CD8-positive, alpha-beta T cell (primary cell): ENCODE measurements at regions of chr10 and their contacts with region 1.

Region 1: DNA sequence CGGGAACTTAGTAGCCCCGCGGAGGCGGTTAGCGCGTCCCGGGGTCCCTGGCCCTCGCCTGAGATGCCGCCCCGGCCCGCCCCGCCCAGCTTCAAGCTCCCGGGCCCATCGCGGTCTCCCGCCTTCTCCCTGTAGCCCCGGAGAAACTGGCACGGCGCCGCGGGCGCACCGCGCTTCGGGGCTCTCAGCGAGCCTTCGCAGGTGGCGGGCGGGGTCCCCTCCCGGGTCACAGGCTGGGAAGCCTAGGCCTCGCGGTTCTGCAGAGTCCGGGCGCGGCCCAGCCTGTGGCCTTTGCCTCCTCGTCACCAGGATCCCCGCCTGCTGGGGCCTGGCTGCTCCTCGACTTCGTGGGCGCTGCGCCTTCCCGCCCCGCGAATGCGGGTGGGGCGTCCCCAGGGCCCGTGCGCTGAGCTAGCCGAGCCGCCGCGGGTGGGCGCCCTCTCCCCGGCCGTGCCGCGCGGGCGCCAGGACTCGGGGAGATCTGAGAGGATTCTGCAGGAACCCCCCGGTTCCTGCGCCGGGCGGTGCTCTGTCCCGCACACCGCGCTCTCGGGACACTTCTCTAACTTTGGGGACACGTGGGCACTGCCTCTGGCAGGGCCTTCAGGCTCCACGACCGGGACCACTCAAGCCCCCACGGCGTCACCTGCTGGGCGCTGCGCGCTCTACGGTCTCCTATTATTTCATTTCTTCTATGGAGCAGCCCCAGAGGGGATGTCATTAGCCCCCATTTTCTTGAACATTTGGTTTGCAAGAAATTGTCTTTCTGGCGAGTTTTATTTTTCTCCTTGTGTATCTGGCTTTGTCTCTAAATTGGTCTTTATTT is 682 bp upstream of the RGS10 start:
- DNase-seq: peak; percentile 34 to 83 (median 68)
- ATAC-seq: peak; percentile 43
- H3K4me3 ChIP-seq: peak overlapping the region; percentile 86 to 90
- H3K4me3 Mint-ChIP-seq: peak overlapping the region; percentile 95
- H3K27ac ChIP-seq: peak overlapping the region in 1 of 2 experiments; percentile 83
- H3K27ac Mint-ChIP-seq: peak overlapping the region; percentile 95
- H3K4me1 ChIP-seq: peaks cover 18% of the 10 kb centered on the region
- H3K4me1 Mint-ChIP-seq: peaks cover 42% of the 10 kb centered on the region
- H3K27me3 ChIP-seq: no peaks in the 10 kb centered on the region
- H3K27me3 Mint-ChIP-seq: no peaks in the 10 kb centered on the region
- CTCF ChIP-seq: peak; percentile 72

Region 2: GRCh38 chr10:118568327-118568848 is 974.8 kb before region 1 on chr10:
- CTCF ChIA-PET with region 1: no interaction called
- POLR2A ChIA-PET with region 1: no interaction called
- intact Hi-C with region 1: no loop called
- DNase-seq: peak; percentile 9 to 82 (median 52)
- ATAC-seq: peak; percentile 80
- H3K4me3 ChIP-seq: no peak overlapping the region
- H3K4me3 Mint-ChIP-seq: no peak overlapping the region
- H3K27ac ChIP-seq: no peak overlapping the region
- H3K27ac Mint-ChIP-seq: no peak overlapping the region
- H3K4me1 ChIP-seq: peaks cover 5% of the 10 kb centered on the region
- H3K4me1 Mint-ChIP-seq: peaks cover 6% of the 10 kb centered on the region
- H3K27me3 ChIP-seq: no peaks in the 10 kb centered on the region
- H3K27me3 Mint-ChIP-seq: no peaks in the 10 kb centered on the region
- CTCF ChIP-seq: peak; percentile 72

Region 3: GRCh38 chr10:118698421-118698820 is 844.8 kb before region 1 on chr10:
- CTCF ChIA-PET with region 1: no interaction called
- POLR2A ChIA-PET with region 1: no interaction called
- intact Hi-C with region 1: loop called in 1 of 2 experiments (anchors 5 kb)
- DNase-seq: peak; percentile 59 to 92 (median 82)
- ATAC-seq: peak; percentile 100
- H3K4me3 ChIP-seq: peak overlapping the region; percentile 10 to 11
- H3K4me3 Mint-ChIP-seq: peak overlapping the region; percentile 75
- H3K27ac ChIP-seq: peak overlapping the region; percentile 18 to 40
- H3K27ac Mint-ChIP-seq: peak overlapping the region; percentile 91
- H3K4me1 ChIP-seq: peaks cover 57% of the 10 kb centered on the region
- H3K4me1 Mint-ChIP-seq: peaks cover 73% of the 10 kb centered on the region
- H3K27me3 ChIP-seq: no peaks in the 10 kb centered on the region
- H3K27me3 Mint-ChIP-seq: no peaks in the 10 kb centered on the region
- CTCF ChIP-seq: no peak

Region 4: DNA sequence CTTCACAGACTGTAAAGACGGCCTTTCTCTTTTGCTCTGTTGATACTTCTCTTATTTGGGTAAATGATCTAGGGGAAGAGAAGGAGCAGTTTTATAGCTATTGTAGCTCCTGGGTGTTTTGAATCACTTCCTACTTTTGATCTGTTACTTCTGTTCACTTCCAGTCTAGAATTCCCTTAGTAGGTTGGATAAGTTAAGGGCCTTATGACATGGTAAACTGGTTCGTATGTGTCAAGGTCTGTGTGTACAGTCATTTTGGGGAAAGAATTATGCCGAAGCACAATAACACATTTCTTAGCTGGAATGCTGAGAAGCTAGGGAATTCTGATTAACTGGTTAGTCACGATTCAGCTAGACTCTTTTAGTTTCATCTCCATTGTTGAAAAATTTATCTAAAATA is 431.1 kb before region 1 on chr10:
- CTCF ChIA-PET with region 1: no interaction called
- POLR2A ChIA-PET with region 1: no interaction called
- intact Hi-C with region 1: no loop called
- DNase-seq: no peak
- ATAC-seq: no peak
- H3K4me3 ChIP-seq: no peak overlapping the region
- H3K4me3 Mint-ChIP-seq: no peak overlapping the region
- H3K27ac ChIP-seq: no peak overlapping the region
- H3K27ac Mint-ChIP-seq: no peak overlapping the region
- H3K4me1 ChIP-seq: no peaks in the 10 kb centered on the region
- H3K4me1 Mint-ChIP-seq: peaks cover 5% of the 10 kb centered on the region
- H3K27me3 ChIP-seq: no peaks in the 10 kb centered on the region
- H3K27me3 Mint-ChIP-seq: no peaks in the 10 kb centered on the region
- CTCF ChIP-seq: no peak

Region 5: GRCh38 chr10:119199231-119199992 is 343.8 kb before region 1 on chr10:
- CTCF ChIA-PET with region 1: interaction called, 16 read pairs
- POLR2A ChIA-PET with region 1: no interaction called
- intact Hi-C with region 1: no loop called
- DNase-seq: peak in 8 of 9 experiments; percentile 15 to 72 (median 46)
- ATAC-seq: peak; percentile 82
- H3K4me3 ChIP-seq: no peak overlapping the region
- H3K4me3 Mint-ChIP-seq: no peak overlapping the region
- H3K27ac ChIP-seq: no peak overlapping the region
- H3K27ac Mint-ChIP-seq: no peak overlapping the region
- H3K4me1 ChIP-seq: no peaks in the 10 kb centered on the region
- H3K4me1 Mint-ChIP-seq: peaks cover 7% of the 10 kb centered on the region
- H3K27me3 ChIP-seq: no peaks in the 10 kb centered on the region
- H3K27me3 Mint-ChIP-seq: no peaks in the 10 kb centered on the region
- CTCF ChIP-seq: peak; percentile 44

Region 6: GRCh38 chr10:119431034-119431767 is 112.0 kb before region 1 on chr10:
- CTCF ChIA-PET with region 1: no interaction called
- POLR2A ChIA-PET with region 1: no interaction called
- intact Hi-C with region 1: no loop called
- DNase-seq: no peak
- ATAC-seq: no peak
- H3K4me3 ChIP-seq: no peak overlapping the region
- H3K4me3 Mint-ChIP-seq: no peak overlapping the region
- H3K27ac ChIP-seq: no peak overlapping the region
- H3K27ac Mint-ChIP-seq: no peak overlapping the region
- H3K4me1 ChIP-seq: peaks cover 15% of the 10 kb centered on the region
- H3K4me1 Mint-ChIP-seq: peaks cover 15% of the 10 kb centered on the region
- H3K27me3 ChIP-seq: no peaks in the 10 kb centered on the region
- H3K27me3 Mint-ChIP-seq: no peaks in the 10 kb centered on the region
- CTCF ChIP-seq: no peak

Region 7: GRCh38 chr10:119494236-119495060 is 48.8 kb before region 1 on chr10:
- CTCF ChIA-PET with region 1: interaction called, 52 read pairs
- POLR2A ChIA-PET with region 1: interaction called, 51 read pairs
- intact Hi-C with region 1: loop called in 1 of 2 experiments (anchors 1 kb)
- DNase-seq: no peak
- ATAC-seq: peak; percentile 16
- H3K4me3 ChIP-seq: no peak overlapping the region
- H3K4me3 Mint-ChIP-seq: peak overlapping the region; percentile 44
- H3K27ac ChIP-seq: peak overlapping the region in 1 of 2 experiments; percentile 40
- H3K27ac Mint-ChIP-seq: peak overlapping the region; percentile 93
- H3K4me1 ChIP-seq: peaks cover 87% of the 10 kb centered on the region
- H3K4me1 Mint-ChIP-seq: peaks cover 74% of the 10 kb centered on the region
- H3K27me3 ChIP-seq: no peaks in the 10 kb centered on the region
- H3K27me3 Mint-ChIP-seq: no peaks in the 10 kb centered on the region
- CTCF ChIP-seq: no peak

Region 8: DNA sequence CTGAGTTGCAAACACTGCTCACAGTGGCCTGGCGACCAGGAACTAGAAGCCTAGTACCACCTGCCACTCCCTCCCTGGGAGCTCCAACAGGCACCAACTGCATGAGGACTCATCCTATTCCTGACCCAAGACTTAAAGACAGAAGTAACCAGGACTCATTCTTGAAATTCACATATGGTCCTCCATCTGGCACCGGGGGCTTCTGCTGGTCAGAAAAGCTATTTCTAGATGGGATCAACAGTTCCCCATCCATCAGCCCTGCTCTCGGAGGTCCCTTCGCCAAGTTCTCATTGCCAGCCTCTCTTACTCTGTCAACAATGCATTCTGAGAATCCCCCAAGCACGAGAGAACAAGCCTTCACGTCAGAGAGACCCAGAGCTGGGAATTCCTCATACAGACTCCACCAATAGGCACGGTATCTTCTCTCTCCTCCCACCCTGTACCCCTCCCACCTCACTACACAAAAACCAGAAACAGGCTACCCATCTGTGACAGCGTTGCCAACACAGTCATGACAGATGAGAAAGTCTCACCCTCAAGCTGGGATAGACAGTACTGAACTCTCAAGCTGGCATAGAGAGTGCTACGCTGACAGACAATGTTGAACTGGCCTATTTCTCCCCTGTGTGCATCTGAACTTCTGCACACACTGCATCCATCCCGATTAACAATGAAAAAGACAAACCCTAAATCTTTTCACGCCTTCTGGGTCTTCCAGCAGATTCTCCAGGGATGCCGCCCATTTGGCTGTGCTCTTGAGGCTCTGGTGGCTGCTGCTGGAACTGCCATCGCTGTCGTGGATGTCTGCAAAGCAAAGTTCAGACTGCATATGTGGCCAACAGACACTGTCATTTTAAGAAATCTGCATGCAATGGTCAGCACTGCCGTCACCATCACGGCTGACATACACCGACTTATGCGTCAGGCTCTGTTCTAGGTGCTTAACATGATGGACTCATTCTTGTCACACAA is 16.3 kb before region 1 on chr10:
- CTCF ChIA-PET with region 1: interaction called, 108 read pairs
- POLR2A ChIA-PET with region 1: interaction called, 43 read pairs
- intact Hi-C with region 1: no loop called
- DNase-seq: peak in 3 of 9 experiments; percentile 34 to 76 (median 50)
- ATAC-seq: peak; percentile 87
- H3K4me3 ChIP-seq: no peak overlapping the region
- H3K4me3 Mint-ChIP-seq: no peak overlapping the region
- H3K27ac ChIP-seq: peak overlapping the region in 1 of 2 experiments; percentile 12
- H3K27ac Mint-ChIP-seq: peak overlapping the region; percentile 89
- H3K4me1 ChIP-seq: peaks cover 62% of the 10 kb centered on the region
- H3K4me1 Mint-ChIP-seq: peaks cover 72% of the 10 kb centered on the region
- H3K27me3 ChIP-seq: no peaks in the 10 kb centered on the region
- H3K27me3 Mint-ChIP-seq: no peaks in the 10 kb centered on the region
- CTCF ChIP-seq: no peak

Region 9: GRCh38 chr10:119872860-119873681 is 329.9 kb after region 1 on chr10:
- CTCF ChIA-PET with region 1: no interaction called
- POLR2A ChIA-PET with region 1: no interaction called
- intact Hi-C with region 1: loop called in 1 of 2 experiments (anchors 5 kb)
- DNase-seq: peak; percentile 79 to 95 (median 87)
- ATAC-seq: peak; percentile 90
- H3K4me3 ChIP-seq: peak overlapping the region; percentile 68 to 96
- H3K4me3 Mint-ChIP-seq: peak overlapping the region; percentile 88
- H3K27ac ChIP-seq: peak overlapping the region; percentile 81 to 86
- H3K27ac Mint-ChIP-seq: peak overlapping the region; percentile 87
- H3K4me1 ChIP-seq: peaks cover 22% of the 10 kb centered on the region
- H3K4me1 Mint-ChIP-seq: peaks cover 39% of the 10 kb centered on the region
- H3K27me3 ChIP-seq: no peaks in the 10 kb centered on the region
- H3K27me3 Mint-ChIP-seq: no peaks in the 10 kb centered on the region
- CTCF ChIP-seq: no peak